K562 (cell line): ENCODE measurements at regions of chr17 and their contacts with region 1.

Region 1: DNA sequence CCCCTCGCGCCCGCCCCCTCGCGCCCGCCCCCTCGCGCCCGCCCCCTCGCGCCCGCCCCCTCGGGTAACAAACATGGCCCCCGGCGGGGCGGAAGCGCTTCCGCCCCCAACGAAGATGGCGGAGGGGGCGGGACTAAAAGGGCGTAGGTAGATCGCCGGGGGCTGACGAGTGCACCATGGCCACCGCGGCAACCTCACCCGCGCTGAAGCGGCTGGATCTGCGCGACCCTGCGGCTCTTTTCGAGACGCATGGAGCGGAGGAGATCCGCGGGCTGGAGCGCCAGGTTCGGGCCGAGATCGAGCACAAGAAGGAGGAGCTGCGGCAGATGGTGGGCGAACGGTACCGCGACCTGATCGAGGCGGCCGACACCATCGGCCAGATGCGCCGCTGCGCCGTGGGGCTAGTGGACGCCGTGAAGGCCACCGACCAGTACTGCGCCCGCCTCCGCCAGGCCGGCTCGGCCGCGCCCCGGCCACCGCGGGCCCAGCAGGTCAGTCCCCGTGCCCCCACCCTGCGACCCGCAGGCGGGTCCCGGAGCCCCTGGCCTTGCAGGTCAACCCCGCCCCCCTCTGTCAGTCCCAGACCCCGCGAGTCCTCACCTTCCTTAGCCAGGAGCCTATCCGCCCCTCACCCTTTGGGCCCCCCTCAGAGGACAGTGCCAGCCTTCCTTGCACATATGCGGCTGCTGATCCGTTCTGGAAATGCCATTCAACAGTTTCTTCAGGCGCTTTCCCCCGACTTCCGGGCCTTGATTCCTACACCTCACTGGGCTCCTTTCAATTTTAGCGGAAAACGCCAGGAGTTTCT is at the start of gene COG1:
- DNase-seq: peak; percentile 92 to 96 (median 94)
- ATAC-seq: peak; percentile 86
- H3K4me3 ChIP-seq: peak within 1 kb of the TSS; percentile 96
- H3K27ac ChIP-seq: peak within 1 kb of the TSS; percentile 98
- H3K4me1 ChIP-seq: peaks cover 4 to 17% of the 10 kb centered on the region in 2 experiments; a peak in 4 of 5 replicates
- H3K27me3 ChIP-seq: no peaks in the 10 kb centered on the region
- CTCF ChIP-seq: no peak
- EP300 ChIP-seq: no peak
- POLR2A ChIP-seq: peak; percentile 80
- RAD21 ChIP-seq: no peak
- polyA plus RNA-seq, gene COG1: 9.5 to 9.9 TPM

Region 2: GRCh38 chr17:72725433-72726068 is 467.5 kb before region 1 on chr17:
- CTCF ChIA-PET with region 1: interaction called, 72 read pairs
- POLR2A ChIA-PET with region 1: interaction called, 3 read pairs
- in situ Hi-C with region 1: loop called (anchors 5 kb)
- intact Hi-C with region 1: loop called (anchors 1 kb)
- DNase-seq: peak; percentile 50 to 76 (median 70)
- ATAC-seq: peak; percentile 87
- H3K4me3 ChIP-seq: no peak overlapping the region
- H3K27ac ChIP-seq: no peak overlapping the region
- H3K4me1 ChIP-seq: 0 out of 5 replicates have a peak, but pooled peaks cover 0 to 2% of the 10 kb centered on the region in 2 experiments
- H3K27me3 ChIP-seq: no peaks in the 10 kb centered on the region
- CTCF ChIP-seq: peak; percentile 75 to 88 (median 84)
- EP300 ChIP-seq: no peak
- POLR2A ChIP-seq: no peak
- RAD21 ChIP-seq: peak; percentile 75 to 92

Region 3: DNA sequence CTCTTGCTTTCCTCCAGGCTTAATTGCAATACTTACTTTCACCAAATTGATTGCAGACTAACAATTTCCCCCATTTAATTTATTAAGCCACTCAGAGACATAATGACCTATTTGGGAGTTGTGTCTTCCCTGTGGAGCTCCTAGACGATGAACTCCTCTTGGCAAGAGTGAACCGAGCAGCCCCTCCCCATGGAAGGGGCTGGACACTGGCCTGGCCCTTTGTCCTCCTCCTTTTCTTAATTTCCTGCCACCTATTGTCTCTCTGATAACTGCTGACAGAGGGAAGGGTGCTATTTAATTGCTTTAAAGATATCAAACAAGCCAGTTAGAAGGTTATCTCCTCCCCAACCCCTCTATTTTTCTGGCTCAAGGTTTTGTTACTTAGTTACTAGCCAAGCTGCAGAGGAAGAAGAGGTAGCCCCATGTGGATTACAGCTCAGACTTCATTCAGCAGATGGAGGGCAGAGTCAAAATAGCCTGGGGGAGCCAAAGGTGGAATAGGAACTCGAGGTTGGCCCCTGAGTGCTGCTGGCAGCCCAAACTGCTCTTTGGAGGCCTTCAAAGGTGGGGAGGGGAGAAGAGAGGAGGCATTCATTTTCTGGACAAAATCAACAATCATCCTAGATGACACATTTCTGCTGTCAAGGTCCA is 32.0 kb before region 1 on chr17:
- CTCF ChIA-PET with region 1: no interaction called
- POLR2A ChIA-PET with region 1: no interaction called
- in situ Hi-C with region 1: no loop called
- intact Hi-C with region 1: no loop called
- DNase-seq: no peak
- ATAC-seq: no peak
- H3K4me3 ChIP-seq: no peak overlapping the region
- H3K27ac ChIP-seq: no peak overlapping the region
- H3K4me1 ChIP-seq: peaks cover 2 to 25% of the 10 kb centered on the region in 2 experiments; a peak in 2 of 5 replicates
- H3K27me3 ChIP-seq: peaks cover 38 to 55% of the 10 kb centered on the region in 2 experiments
- CTCF ChIP-seq: no peak
- EP300 ChIP-seq: no peak
- POLR2A ChIP-seq: no peak
- RAD21 ChIP-seq: no peak

Region 4: GRCh38 chr17:73210002-73210678 is 17.0 kb after region 1 on chr17:
- CTCF ChIA-PET with region 1: no interaction called
- POLR2A ChIA-PET with region 1: interaction called, 15 read pairs
- in situ Hi-C with region 1: no loop called
- intact Hi-C with region 1: no loop called
- DNase-seq: peak; percentile 58 to 81 (median 71)
- ATAC-seq: peak; percentile 88
- H3K4me3 ChIP-seq: no peak overlapping the region
- H3K27ac ChIP-seq: peak overlapping the region; percentile 51; the same call in 2 of the 3 replicates
- H3K4me1 ChIP-seq: peaks cover 9 to 11% of the 10 kb centered on the region in 2 experiments; a peak in 4 of 5 replicates
- H3K27me3 ChIP-seq: no peaks in the 10 kb centered on the region
- CTCF ChIP-seq: peak; percentile 39 to 64 (median 57); a peak in 5 of 6 replicates
- EP300 ChIP-seq: no peak
- POLR2A ChIP-seq: no peak
- RAD21 ChIP-seq: no peak; a peak in 1 of 4 replicates

Region 5: DNA sequence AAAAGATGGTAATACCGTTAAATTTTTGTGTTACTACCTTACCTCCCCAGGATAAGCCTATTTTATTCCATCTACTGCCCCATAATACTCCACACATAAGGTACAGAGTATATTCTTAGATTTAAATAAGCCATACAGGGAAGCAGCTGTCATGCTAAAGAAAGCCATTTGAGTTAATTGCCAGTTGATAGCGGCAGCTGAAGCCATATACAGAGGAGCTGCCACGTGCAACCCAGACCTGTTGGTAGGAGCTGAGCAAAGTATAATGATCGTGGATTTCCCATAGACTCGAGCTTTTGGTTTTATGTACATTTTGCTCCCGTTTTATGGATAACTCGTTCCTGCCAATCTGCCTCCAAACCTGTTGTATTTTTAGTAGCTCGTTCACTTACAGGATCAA is 56.6 kb after region 1 on chr17:
- CTCF ChIA-PET with region 1: interaction called, 9 read pairs
- POLR2A ChIA-PET with region 1: no interaction called
- in situ Hi-C with region 1: no loop called
- intact Hi-C with region 1: loop called (anchors 5 kb)
- DNase-seq: no peak
- ATAC-seq: no peak
- H3K4me3 ChIP-seq: no peak overlapping the region
- H3K27ac ChIP-seq: no peak overlapping the region
- H3K4me1 ChIP-seq: no peaks in the 10 kb centered on the region
- H3K27me3 ChIP-seq: peaks cover 4 to 9% of the 10 kb centered on the region in 2 experiments; a peak in 4 of 5 replicates
- CTCF ChIP-seq: no peak
- EP300 ChIP-seq: no peak
- POLR2A ChIP-seq: no peak
- RAD21 ChIP-seq: no peak